Calu3 (cell line): ENCODE measurements at regions of chr1 and their contacts with region 1.

Region 1: GRCh38 chr1:59237900-59238299 is 59.0 kb upstream of the FGGY start:
- DNase-seq: no peak
- H3K4me3 Mint-ChIP-seq: no peak overlapping the region
- H3K27ac Mint-ChIP-seq: no peak overlapping the region
- H3K4me1 Mint-ChIP-seq: no peaks in the 10 kb centered on the region
- H3K27me3 Mint-ChIP-seq: no peaks in the 10 kb centered on the region
- CTCF ChIP-seq: no peak

Region 2: GRCh38 chr1:58204284-58204683 is 1033.6 kb before region 1 on chr1:
- CTCF ChIA-PET with region 1: no interaction called
- intact Hi-C with region 1: loop called (anchors 5 kb)
- DNase-seq: no peak
- H3K4me3 Mint-ChIP-seq: no peak overlapping the region
- H3K27ac Mint-ChIP-seq: no peak overlapping the region
- H3K4me1 Mint-ChIP-seq: no peaks in the 10 kb centered on the region
- H3K27me3 Mint-ChIP-seq: peaks cover 38% of the 10 kb centered on the region
- CTCF ChIP-seq: no peak